ENCODE measurements at regions of chr3 and their contacts with region 1.

Region 1: GRCh38 chr3:45968706-45969105 is 25.4 kb downstream of the CXCR6 start:
- DNase-seq: no peak
- H3K4me3 ChIP-seq: no peak overlapping the region
- H3K27ac ChIP-seq: no peak overlapping the region
- H3K4me1 ChIP-seq: peaks cover 0 to 18% (median 12%) of the 10 kb centered on the region in 4 experiments
- H3K27me3 ChIP-seq: no peaks in the 10 kb centered on the region

Region 2: GRCh38 chr3:45896956-45897355 is 71.8 kb before region 1 on chr3:
- CTCF ChIA-PET with region 1: no interaction called
- POLR2A ChIA-PET with region 1: no interaction called
- DNase-seq: no peak
- H3K4me3 ChIP-seq: no peak overlapping the region
- H3K27ac ChIP-seq: no peak overlapping the region
- H3K4me1 ChIP-seq: peaks cover 7 to 26% (median 21%) of the 10 kb centered on the region in 4 experiments
- H3K27me3 ChIP-seq: no peaks in the 10 kb centered on the region

Region 3: GRCh38 chr3:45938864-45939263 is 29.8 kb before region 1 on chr3:
- CTCF ChIA-PET with region 1: interaction called, 28 read pairs
- POLR2A ChIA-PET with region 1: no interaction called
- DNase-seq: peak; percentile 87 to 94 (median 91)
- H3K4me3 ChIP-seq: no peak overlapping the region
- H3K27ac ChIP-seq: no peak overlapping the region
- H3K4me1 ChIP-seq: peaks cover 0 to 20% (median 10%) of the 10 kb centered on the region in 4 experiments
- H3K27me3 ChIP-seq: no peaks in the 10 kb centered on the region

Region 4: DNA sequence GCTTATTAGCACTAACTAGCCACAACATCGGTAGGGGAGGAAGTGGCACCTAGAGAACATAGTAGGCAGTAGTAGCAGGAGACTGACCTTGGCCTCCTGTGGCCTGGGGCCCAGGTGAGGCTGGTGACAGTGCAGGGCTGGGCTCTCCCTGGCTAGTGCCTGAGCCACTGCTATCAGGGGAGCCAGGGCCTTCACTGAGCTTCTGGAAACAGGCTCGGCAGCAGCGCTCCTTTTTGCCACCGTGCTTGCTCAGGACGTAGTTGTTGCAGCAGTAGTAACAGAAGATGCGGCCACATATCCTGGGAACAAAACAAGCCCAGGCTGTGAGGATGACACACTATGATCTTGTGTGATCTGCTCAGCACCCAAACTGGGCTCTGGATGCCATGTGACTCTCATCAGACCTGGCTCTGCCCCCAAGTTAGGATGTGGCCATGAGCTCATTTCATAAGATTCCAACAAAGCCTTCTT is 10.3 kb before region 1 on chr3:
- CTCF ChIA-PET with region 1: interaction called, 16 read pairs
- POLR2A ChIA-PET with region 1: interaction called, 3 read pairs
- DNase-seq: no peak
- H3K4me3 ChIP-seq: no peak overlapping the region
- H3K27ac ChIP-seq: no peak overlapping the region
- H3K4me1 ChIP-seq: no peaks in the 10 kb centered on the region
- H3K27me3 ChIP-seq: no peaks in the 10 kb centered on the region

Region 5: DNA sequence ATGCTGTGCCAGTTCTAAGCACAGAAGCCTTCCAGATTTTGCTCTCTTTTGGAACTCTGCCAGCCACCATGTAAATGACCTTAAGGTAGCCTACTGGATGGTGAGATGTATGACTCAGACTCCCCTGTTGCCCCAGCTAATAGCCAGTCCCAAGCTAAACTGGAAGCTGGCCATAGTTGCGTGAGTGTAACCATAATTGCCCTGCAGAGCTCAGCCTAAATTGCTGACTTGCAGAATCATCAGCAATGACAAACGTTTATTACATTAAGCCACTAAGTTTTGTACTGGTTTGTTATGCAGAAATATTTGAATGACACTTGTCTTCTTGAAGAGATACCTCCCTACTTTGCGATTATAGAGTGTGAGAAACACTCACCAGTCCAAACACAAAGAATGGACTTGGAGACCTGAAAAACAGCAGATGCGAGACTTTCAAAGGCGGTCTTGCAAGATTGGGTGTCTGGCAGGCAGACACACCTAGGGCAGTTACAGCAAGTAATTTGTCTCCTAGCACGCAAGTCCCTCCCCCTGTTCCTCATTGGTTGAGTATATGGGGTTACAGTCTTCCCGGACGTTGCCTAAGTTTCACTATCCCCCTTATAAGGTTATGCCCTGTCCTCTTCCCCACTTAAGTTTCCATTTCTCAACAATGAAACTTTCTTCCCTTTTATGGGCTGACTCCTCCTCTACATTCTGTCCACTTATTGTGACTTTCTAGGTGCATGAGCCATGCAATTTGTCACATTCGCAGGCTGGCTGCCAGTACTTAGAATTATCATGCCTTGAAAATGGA is 142.2 kb after region 1 on chr3:
- CTCF ChIA-PET with region 1: no interaction called
- POLR2A ChIA-PET with region 1: no interaction called
- DNase-seq: peak in 2 of 3 donors; percentile 19 to 26
- H3K4me3 ChIP-seq: no peak overlapping the region
- H3K27ac ChIP-seq: no peak overlapping the region
- H3K4me1 ChIP-seq: peaks cover 0 to 20% (median 6%) of the 10 kb centered on the region in 4 experiments
- H3K27me3 ChIP-seq: no peaks in the 10 kb centered on the region

Region 6: GRCh38 chr3:46143951-46144473 is 175.3 kb after region 1 on chr3:
- CTCF ChIA-PET with region 1: no interaction called
- POLR2A ChIA-PET with region 1: no interaction called
- DNase-seq: no peak
- H3K4me3 ChIP-seq: no peak overlapping the region
- H3K27ac ChIP-seq: no peak overlapping the region
- H3K4me1 ChIP-seq: peaks cover 0 to 9% (median 6%) of the 10 kb centered on the region in 4 experiments
- H3K27me3 ChIP-seq: no peaks in the 10 kb centered on the region

Region 7: GRCh38 chr3:46222435-46223161 is 253.9 kb after region 1 on chr3:
- CTCF ChIA-PET with region 1: no interaction called
- POLR2A ChIA-PET with region 1: no interaction called
- DNase-seq: peak; percentile 38 to 88 (median 85)
- H3K4me3 ChIP-seq: peak overlapping the region in 1 of 7 experiments; percentile 20
- H3K27ac ChIP-seq: no peak overlapping the region
- H3K4me1 ChIP-seq: peaks cover 19 to 38% (median 30%) of the 10 kb centered on the region in 4 experiments
- H3K27me3 ChIP-seq: no peaks in the 10 kb centered on the region

Measured in common myeloid progenitor, CD34-positive (primary cell).